IMR-90 (cell line): ENCODE measurements at regions of chr20 and their contacts with region 1.

Region 1: GRCh38 chr20:1325173-1326030 is 3.5 kb downstream of the SDCBP2 start:
- DNase-seq: peak; percentile 97
- ATAC-seq: peak; percentile 80
- H3K4me3 ChIP-seq: peak overlapping the region; percentile 60
- H3K27ac ChIP-seq: peak overlapping the region; percentile 89
- H3K4me1 ChIP-seq: peaks cover 34% of the 10 kb centered on the region
- H3K27me3 ChIP-seq: no peaks in the 10 kb centered on the region
- CTCF ChIP-seq: no peak; the same call in 1 of the 2 replicates
- POLR2A ChIP-seq: peak; percentile 97
- RAD21 ChIP-seq: 0 out of 2 replicates have a peak, but pooled peaks have one; percentile 1

Region 2: DNA sequence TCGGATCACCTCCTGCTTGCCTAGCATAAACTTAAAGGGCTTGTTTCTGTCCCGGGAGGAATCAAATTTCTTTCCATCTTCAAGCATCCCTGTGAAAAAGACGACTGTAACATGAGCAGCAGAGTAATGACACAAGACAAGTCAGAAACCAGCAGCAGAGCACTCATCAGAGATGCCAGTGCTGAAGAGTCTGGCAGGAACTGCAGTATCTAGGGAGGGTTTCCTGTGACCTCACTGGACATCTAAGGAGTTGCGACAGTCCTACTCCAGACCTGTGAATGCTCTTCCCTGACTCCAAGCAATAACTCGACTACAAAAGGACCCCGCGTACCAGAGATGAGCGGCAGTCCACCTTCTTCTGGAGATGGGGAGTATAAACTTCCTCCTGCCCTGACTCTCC is 50.1 kb after region 1 on chr20:
- CTCF ChIA-PET with region 1: no interaction called
- POLR2A ChIA-PET with region 1: no interaction called
- dilution Hi-C with region 1: no loop called
- in situ Hi-C with region 1: no loop called
- intact Hi-C with region 1: loop called (anchors 5 kb)
- DNase-seq: peak; percentile 93
- ATAC-seq: peak; percentile 82
- H3K4me3 ChIP-seq: no peak overlapping the region
- H3K27ac ChIP-seq: peak overlapping the region; percentile 29; the same call in 1 of the 2 replicates
- H3K4me1 ChIP-seq: peaks cover 37% of the 10 kb centered on the region
- H3K27me3 ChIP-seq: no peaks in the 10 kb centered on the region
- CTCF ChIP-seq: no peak
- POLR2A ChIP-seq: no peak
- RAD21 ChIP-seq: no peak; the same call in 1 of the 2 replicates

Region 3: GRCh38 chr20:1392823-1393506 is 67.6 kb after region 1 on chr20 and contains the start of gene FKBP1A:
- CTCF ChIA-PET with region 1: no interaction called
- POLR2A ChIA-PET with region 1: no interaction called
- dilution Hi-C with region 1: no loop called
- in situ Hi-C with region 1: no loop called
- intact Hi-C with region 1: loop called (anchors 2 kb)
- DNase-seq: peak; percentile 90
- ATAC-seq: peak; percentile 94
- H3K4me3 ChIP-seq: peak within 1 kb of the TSS; percentile 65
- H3K27ac ChIP-seq: peak within 1 kb of the TSS; percentile 85
- H3K4me1 ChIP-seq: peaks cover 26% of the 10 kb centered on the region
- H3K27me3 ChIP-seq: no peaks in the 10 kb centered on the region
- CTCF ChIP-seq: 0 out of 2 replicates have a peak, but pooled peaks have one; percentile 8
- POLR2A ChIP-seq: peak; percentile 80
- RAD21 ChIP-seq: 0 out of 2 replicates have a peak, but pooled peaks have one; percentile 6
- total RNA-seq, gene FKBP1A: 91.9 and 120 TPM in 2 replicates

Region 4: DNA sequence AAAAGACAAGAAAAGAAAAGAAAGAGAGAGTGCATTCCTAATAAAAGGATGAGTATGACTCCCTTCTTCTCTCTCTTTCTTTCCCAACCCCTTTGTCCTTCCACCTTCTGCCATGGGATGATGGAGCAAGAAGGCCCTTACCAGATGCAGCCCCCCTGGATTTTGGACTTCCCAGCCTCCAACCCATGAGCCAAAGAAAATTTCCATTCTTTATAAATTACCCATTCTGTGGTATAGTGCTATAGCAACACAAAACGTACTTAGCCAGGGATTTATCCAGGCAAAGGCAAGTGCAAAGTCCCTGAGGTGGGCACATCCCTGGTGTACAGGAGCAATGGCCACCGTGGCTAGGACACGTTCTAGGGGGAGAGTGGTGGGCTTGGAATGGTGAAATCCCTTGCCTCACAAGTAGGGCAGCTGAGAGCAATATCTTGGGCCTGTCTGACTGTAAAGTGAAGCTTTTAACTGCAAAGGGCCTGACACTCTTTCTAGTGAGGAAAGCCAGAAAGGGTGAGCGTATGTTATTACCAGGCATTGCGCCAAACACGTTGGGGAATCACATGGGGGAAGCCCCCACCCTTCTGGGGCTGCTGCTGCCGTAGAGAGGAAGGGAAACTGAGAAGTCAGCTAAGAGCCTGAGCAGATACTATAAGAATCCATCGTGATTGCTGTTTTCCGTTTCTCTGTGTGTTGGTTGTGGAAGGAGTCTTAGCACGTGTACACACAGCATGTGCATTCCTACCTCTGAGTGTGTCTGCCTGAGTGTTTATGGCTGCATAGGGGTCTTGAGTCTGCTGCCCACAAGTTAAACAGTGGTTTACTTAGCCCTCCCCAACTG is 519.1 kb after region 1 on chr20:
- CTCF ChIA-PET with region 1: no interaction called
- POLR2A ChIA-PET with region 1: no interaction called
- dilution Hi-C with region 1: no loop called
- in situ Hi-C with region 1: loop called (anchors 25 kb)
- intact Hi-C with region 1: no loop called
- DNase-seq: peak; percentile 92
- ATAC-seq: peak; percentile 75
- H3K4me3 ChIP-seq: no peak overlapping the region
- H3K27ac ChIP-seq: peak overlapping the region; percentile 88
- H3K4me1 ChIP-seq: peaks cover 18% of the 10 kb centered on the region
- H3K27me3 ChIP-seq: no peaks in the 10 kb centered on the region
- CTCF ChIP-seq: no peak
- POLR2A ChIP-seq: no peak
- RAD21 ChIP-seq: no peak

Region 5: GRCh38 chr20:2626853-2627541 is 1301.6 kb after region 1 on chr20:
- CTCF ChIA-PET with region 1: no interaction called
- POLR2A ChIA-PET with region 1: interaction called, 11 read pairs
- dilution Hi-C with region 1: no loop called
- in situ Hi-C with region 1: no loop called
- intact Hi-C with region 1: no loop called
- DNase-seq: peak; percentile 51
- ATAC-seq: no peak; the same call in 1 of the 2 replicates
- H3K4me3 ChIP-seq: no peak overlapping the region
- H3K27ac ChIP-seq: no peak overlapping the region
- H3K4me1 ChIP-seq: no peaks in the 10 kb centered on the region
- H3K27me3 ChIP-seq: peaks cover 4% of the 10 kb centered on the region
- CTCF ChIP-seq: no peak
- POLR2A ChIP-seq: no peak
- RAD21 ChIP-seq: no peak